Esophagus squamous epithelium (tissue), 5 donors: ENCODE measurements at regions of chr14 and their contacts with region 1.

Region 1: DNA sequence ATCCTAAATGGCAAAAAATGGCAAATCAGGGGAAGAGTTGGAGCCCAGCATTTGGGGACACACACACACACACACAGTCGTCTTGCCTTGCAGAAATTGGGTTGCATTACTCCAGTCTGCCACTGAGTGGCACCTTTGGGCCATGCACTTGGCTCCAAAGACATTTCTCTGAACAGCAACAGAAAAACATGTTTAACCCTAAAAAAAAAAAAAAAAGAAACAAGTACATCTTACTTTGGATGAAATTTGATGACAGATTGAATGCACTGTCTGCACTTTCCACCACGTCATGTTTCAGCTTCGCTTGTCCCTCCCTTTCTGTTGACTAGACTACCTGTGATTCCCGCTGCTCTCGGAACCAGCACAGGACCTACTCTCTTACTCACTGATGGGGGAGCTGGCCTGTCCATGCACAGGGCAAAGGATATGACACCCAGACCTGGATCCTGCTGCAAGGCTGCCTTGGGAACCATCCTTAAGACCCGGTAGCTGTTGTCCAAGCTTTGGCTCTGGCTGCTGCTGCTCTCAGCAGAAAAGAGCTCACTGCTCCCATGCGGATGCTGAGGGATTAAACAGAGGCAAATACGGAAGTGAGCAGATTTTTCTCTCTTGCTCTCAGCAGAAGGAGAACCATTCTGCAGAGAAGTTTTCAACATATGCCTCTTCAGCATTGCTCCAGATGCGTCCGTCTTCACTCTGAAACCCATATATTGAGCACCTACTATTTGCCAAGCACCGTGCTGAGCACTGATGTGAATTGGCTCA is 376.8 kb downstream of the DPF3 start:
- DNase-seq: no peak
- H3K4me3 ChIP-seq: no peak overlapping the region
- H3K27ac ChIP-seq: no peak overlapping the region
- H3K4me1 ChIP-seq: peaks cover 0 to 18% (median 0%) of the 10 kb centered on the region in 3 donors
- H3K27me3 ChIP-seq: peaks cover 0 to 7% (median 0%) of the 10 kb centered on the region in 4 donors
- CTCF ChIP-seq: peak; percentile 75 to 91 (median 83)
- POLR2A ChIP-seq: no peak

Region 2: GRCh38 chr14:72380456-72380855 is 136.7 kb before region 1 on chr14:
- intact Hi-C with region 1: no loop called
- DNase-seq: no peak
- H3K4me3 ChIP-seq: no peak overlapping the region
- H3K27ac ChIP-seq: no peak overlapping the region
- H3K4me1 ChIP-seq: no peaks in the 10 kb centered on the region
- H3K27me3 ChIP-seq: no peaks in the 10 kb centered on the region
- CTCF ChIP-seq: no peak
- POLR2A ChIP-seq: no peak

Region 3: DNA sequence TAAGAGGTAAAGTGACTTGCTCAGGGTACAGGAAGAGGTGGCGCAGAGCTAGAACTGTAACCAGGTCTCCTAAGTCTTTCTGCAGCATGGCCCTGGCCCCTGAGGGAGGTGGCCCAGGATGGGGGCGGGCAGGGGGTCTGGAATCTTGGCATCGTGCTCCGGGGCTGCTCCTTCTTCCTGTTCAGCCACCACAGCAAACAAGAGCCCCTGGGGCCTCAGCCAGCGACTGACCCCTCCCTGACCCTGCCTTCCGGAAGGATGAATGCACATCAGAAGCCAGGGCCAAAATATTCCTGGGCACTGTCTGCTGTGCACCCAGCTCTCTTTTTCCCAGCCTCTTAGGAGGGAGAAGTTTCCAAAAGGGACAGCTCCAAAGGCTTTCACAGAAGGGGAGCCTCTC is 134.0 kb after region 1 on chr14:
- intact Hi-C with region 1: no loop called
- DNase-seq: no peak
- H3K4me3 ChIP-seq: no peak overlapping the region
- H3K27ac ChIP-seq: no peak overlapping the region
- H3K4me1 ChIP-seq: peaks cover 0 to 4% (median 0%) of the 10 kb centered on the region in 3 donors
- H3K27me3 ChIP-seq: peaks cover 0 to 11% (median 0%) of the 10 kb centered on the region in 4 donors
- CTCF ChIP-seq: no peak
- POLR2A ChIP-seq: no peak

Region 4: GRCh38 chr14:72904840-72905561 is 387.9 kb after region 1 on chr14:
- intact Hi-C with region 1: loop called (anchors 5 kb)
- DNase-seq: no peak
- H3K4me3 ChIP-seq: no peak overlapping the region
- H3K27ac ChIP-seq: no peak overlapping the region
- H3K4me1 ChIP-seq: peaks cover 0 to 30% (median 0%) of the 10 kb centered on the region in 3 donors
- H3K27me3 ChIP-seq: peaks cover 0 to 13% (median 0%) of the 10 kb centered on the region in 4 donors
- CTCF ChIP-seq: peak; percentile 89 to 94 (median 93)
- POLR2A ChIP-seq: no peak

Region 5: GRCh38 chr14:72948481-72949138 is 431.5 kb after region 1 on chr14:
- intact Hi-C with region 1: loop called (anchors 5 kb)
- DNase-seq: no peak
- H3K4me3 ChIP-seq: no peak overlapping the region
- H3K27ac ChIP-seq: no peak overlapping the region
- H3K4me1 ChIP-seq: no peaks in the 10 kb centered on the region
- H3K27me3 ChIP-seq: no peaks in the 10 kb centered on the region
- CTCF ChIP-seq: peak; percentile 59 to 91 (median 75)
- POLR2A ChIP-seq: no peak